ENCODE measurements at regions of chr2 and their contacts with region 1.

Region 1: GRCh38 chr2:137838255-137839092 is 125.8 kb upstream of the HNMT start:
- DNase-seq: no peak
- H3K4me3 ChIP-seq: no peak overlapping the region
- H3K27ac ChIP-seq: no peak overlapping the region
- H3K4me1 ChIP-seq: peaks cover 0 to 6% (median 0%) of the 10 kb centered on the region in 3 donors
- H3K27me3 ChIP-seq: no peaks in the 10 kb centered on the region
- CTCF ChIP-seq: peak; percentile 9 to 77 (median 60)
- POLR2A ChIP-seq: no peak

Region 2: GRCh38 chr2:136423516-136423996 is 1414.9 kb before region 1 on chr2:
- intact Hi-C with region 1: loop called (anchors 10 kb)
- DNase-seq: no peak
- H3K4me3 ChIP-seq: peak overlapping the region; percentile 9 to 65 (median 42)
- H3K27ac ChIP-seq: no peak overlapping the region
- H3K4me1 ChIP-seq: peaks cover 0 to 13% (median 2%) of the 10 kb centered on the region in 3 donors
- H3K27me3 ChIP-seq: peaks cover 0 to 39% (median 0%) of the 10 kb centered on the region in 4 donors
- CTCF ChIP-seq: peak; percentile 78 to 90 (median 84)
- POLR2A ChIP-seq: no peak

Region 3: DNA sequence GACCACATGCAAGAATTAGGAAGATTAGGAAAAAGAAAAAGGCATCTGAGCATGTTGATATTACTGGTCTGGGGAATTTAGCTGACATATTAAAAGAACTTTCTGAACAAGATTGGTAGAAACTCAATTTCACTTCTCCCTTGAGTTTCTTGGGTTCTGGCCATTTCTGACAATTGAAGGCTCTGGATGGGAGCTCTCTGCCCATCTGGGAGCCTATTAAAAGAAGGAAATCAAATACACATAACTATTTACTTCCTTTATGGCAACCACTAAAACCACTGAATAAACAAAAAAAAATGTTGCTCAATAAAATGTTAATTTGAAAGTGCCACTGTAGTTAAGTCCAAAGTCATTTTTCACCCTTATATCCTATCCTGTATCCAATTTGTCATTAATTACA is 91.0 kb before region 1 on chr2:
- intact Hi-C with region 1: no loop called
- DNase-seq: no peak
- H3K4me3 ChIP-seq: no peak overlapping the region
- H3K27ac ChIP-seq: no peak overlapping the region
- H3K4me1 ChIP-seq: no peaks in the 10 kb centered on the region
- H3K27me3 ChIP-seq: no peaks in the 10 kb centered on the region
- CTCF ChIP-seq: no peak
- POLR2A ChIP-seq: no peak

Region 4: DNA sequence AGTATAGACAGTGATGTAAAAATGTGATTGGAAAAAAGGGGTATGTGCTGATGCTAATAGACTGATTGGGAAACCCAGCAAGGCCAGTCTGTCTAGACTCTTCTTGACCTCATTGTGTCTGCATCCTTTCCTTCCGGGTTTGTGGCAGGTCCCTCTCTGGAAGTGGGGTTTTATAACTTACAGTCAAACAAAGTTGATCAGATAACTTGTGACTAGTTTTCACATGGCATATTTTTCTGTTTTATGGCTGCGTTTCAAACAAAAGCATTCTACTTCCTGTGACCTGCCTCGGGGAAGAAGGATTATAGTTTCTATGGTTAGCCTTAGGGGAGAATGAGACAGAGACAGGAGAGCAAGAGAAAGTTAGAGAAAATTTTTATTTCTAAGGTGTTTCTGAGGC is 63.0 kb before region 1 on chr2:
- intact Hi-C with region 1: no loop called
- DNase-seq: no peak
- H3K4me3 ChIP-seq: no peak overlapping the region
- H3K27ac ChIP-seq: no peak overlapping the region
- H3K4me1 ChIP-seq: no peaks in the 10 kb centered on the region
- H3K27me3 ChIP-seq: no peaks in the 10 kb centered on the region
- CTCF ChIP-seq: no peak
- POLR2A ChIP-seq: no peak

Region 5: GRCh38 chr2:137888845-137889244 is 50.4 kb after region 1 on chr2:
- intact Hi-C with region 1: no loop called
- DNase-seq: no peak
- H3K4me3 ChIP-seq: no peak overlapping the region
- H3K27ac ChIP-seq: no peak overlapping the region
- H3K4me1 ChIP-seq: no peaks in the 10 kb centered on the region
- H3K27me3 ChIP-seq: no peaks in the 10 kb centered on the region
- CTCF ChIP-seq: peak in 3 of 6 experiments; percentile 17 to 40 (median 18)
- POLR2A ChIP-seq: no peak